SK-N-SH (cell line): ENCODE measurements at regions of chr17 and their contacts with region 1.

Region 1: DNA sequence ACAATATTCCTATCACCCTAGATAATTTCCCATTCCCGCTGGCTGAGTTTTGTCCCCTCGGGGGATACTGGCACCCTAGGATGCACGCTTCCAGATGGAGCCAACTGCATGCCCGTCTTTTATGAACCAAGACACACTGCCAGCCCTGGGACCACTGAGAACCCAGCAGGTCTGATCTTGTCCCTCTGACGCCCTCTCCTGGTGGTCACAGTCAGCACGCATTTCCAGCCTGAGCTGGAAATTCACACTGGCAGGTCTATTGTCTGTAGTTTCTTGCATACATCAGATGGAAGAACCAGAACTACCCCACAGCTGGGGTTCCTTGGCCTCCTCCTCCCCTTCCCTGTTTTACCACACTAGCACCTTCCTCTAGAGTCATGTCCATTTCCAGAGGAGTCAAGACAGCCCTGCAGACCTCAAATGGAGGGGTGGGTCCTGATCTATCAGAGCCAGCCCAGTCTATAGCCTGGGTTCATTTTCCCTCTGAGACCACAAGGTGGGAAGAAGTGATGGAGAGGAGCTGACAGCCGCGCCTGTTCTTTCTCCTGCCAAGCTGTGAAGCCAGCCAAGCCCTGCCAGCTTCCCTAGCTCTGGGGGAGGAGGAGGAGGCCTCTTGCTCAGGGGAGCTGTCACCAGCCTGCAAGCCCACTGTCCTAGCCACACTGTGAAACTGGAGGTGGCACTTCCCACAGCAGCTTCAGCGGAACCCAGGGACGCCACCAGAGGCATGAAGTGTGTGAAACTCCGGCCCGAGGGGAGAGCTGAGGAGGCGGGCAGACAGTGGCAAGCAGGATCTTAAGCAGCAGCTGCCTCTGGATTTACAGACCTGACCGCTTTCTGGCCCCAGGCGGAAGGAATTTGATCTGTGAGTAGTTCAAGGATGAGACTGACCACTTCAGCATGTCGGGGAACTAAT is 29.3 kb downstream of the MXRA7 start:
- DNase-seq: peak; percentile 89
- H3K4me3 ChIP-seq: no peak overlapping the region; a peak in 1 of 4 replicates
- H3K27ac ChIP-seq: peak overlapping the region in 1 of 2 experiments; percentile 23; a peak in 1 of 4 replicates
- H3K4me1 ChIP-seq: peaks cover 0 to 23% of the 10 kb centered on the region in 2 experiments; a peak in 1 of 4 replicates
- H3K27me3 ChIP-seq: no peaks in the 10 kb centered on the region
- CTCF ChIP-seq: peak; percentile 95
- EP300 ChIP-seq: no peak
- RAD21 ChIP-seq: peak; percentile 95

Region 2: DNA sequence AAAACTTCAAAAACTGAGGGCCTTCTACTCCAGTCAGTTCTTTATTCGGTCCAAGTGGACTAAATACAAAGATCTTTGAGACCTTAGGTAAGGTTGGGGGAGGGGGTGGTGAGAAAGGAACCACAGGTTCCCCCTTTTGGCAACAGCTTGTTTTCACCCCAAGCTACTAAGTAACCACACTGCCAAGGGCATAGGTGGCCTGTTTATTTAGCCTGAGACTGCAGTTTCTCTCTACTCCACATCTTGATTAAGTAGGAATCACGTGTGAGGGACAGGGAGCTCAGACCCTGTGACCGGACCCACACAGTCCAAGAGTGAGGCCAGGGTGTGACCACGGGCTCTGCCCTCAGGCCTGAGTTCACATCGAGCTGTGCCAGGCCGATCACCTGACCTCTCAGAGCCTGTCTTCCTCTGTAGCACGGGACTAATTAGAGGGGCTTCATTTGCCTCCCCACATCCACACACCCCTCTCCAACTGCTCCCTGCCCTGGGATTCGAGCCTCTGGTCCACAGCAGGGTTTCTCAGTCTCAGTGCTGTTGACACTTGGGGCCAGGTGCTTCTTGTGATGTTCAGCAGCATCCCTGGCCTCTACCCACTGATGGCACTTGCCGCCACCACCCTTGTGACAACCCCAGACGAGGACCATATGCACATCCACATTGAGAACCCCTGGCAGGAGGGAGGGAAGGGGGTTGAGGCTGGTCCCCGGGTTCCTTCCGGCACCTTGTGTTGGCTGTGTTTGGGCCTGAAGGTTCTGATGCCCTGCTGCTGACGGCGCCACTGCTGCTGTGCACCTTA is 113.6 kb before region 1 on chr17:
- CTCF ChIA-PET with region 1: interaction called, 25 read pairs
- POLR2A ChIA-PET with region 1: interaction called, 3 read pairs
- DNase-seq: peak; percentile 45
- H3K4me3 ChIP-seq: no peak overlapping the region
- H3K27ac ChIP-seq: no peak overlapping the region; a peak in 1 of 4 replicates
- H3K4me1 ChIP-seq: peaks cover 1 to 8% of the 10 kb centered on the region in 2 experiments; a peak in 2 of 4 replicates
- H3K27me3 ChIP-seq: no peaks in the 10 kb centered on the region
- CTCF ChIP-seq: no peak
- EP300 ChIP-seq: no peak
- RAD21 ChIP-seq: no peak

Region 3: DNA sequence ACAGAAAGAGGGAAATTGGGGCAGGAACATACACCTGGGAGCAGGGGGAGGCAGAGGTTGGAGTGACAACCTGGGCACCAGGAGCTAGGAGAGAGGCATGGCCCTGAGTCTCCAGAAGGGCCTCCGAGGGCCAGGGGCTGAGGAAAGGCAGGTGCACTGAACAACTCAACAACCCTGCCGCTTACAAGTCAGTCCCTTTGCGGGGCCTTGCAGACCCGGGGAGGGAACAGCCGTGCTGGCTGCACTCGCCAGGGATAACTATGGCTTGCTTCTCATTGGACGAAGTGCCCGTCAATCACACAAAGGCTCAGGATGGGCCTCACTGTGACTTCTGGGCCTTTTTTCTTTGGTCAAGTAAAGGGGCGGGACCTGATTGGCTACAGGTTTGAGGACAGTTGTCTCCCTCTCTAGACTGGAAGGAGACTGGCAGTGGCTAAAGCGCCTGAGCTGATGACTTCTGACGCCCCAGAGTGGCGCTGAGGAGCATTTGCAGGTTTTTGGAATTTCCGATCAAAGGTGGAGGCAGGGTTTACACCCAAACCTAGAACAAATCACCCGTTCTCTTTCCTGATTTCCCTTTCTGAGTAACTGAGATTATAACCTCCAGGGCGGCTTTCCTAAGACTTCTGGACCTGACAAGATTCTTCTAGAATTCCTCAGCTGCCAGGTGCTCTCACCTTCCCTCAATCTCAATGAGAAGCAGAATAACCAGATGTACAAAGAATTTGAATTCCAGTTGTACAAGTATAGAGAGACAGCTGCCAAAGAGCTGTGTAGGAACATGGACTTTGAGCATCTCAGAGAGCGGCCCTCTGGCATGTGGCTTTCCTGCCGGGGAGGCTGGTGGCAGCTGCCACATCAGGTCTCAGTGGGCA is 68.3 kb before region 1 on chr17:
- CTCF ChIA-PET with region 1: interaction called, 16 read pairs
- POLR2A ChIA-PET with region 1: no interaction called
- DNase-seq: no peak
- H3K4me3 ChIP-seq: no peak overlapping the region
- H3K27ac ChIP-seq: no peak overlapping the region
- H3K4me1 ChIP-seq: no peaks in the 10 kb centered on the region; a peak in 1 of 4 replicates
- H3K27me3 ChIP-seq: no peaks in the 10 kb centered on the region; the same call in 1 of the 2 replicates
- CTCF ChIP-seq: no peak
- EP300 ChIP-seq: no peak
- RAD21 ChIP-seq: no peak

Region 4: GRCh38 chr17:76671123-76671911 is 10.2 kb before region 1 on chr17:
- CTCF ChIA-PET with region 1: interaction called, 42 read pairs
- POLR2A ChIA-PET with region 1: interaction called, 6 read pairs
- DNase-seq: peak; percentile 99
- H3K4me3 ChIP-seq: peak overlapping the region; percentile 69 to 70
- H3K27ac ChIP-seq: peak overlapping the region in 1 of 2 experiments; percentile 94; a peak in 3 of 4 replicates
- H3K4me1 ChIP-seq: peaks cover 0 to 33% of the 10 kb centered on the region in 2 experiments; a peak in 2 of 4 replicates
- H3K27me3 ChIP-seq: no peaks in the 10 kb centered on the region
- CTCF ChIP-seq: no peak
- EP300 ChIP-seq: no peak; a peak in 1 of 4 replicates
- RAD21 ChIP-seq: no peak

Region 5: DNA sequence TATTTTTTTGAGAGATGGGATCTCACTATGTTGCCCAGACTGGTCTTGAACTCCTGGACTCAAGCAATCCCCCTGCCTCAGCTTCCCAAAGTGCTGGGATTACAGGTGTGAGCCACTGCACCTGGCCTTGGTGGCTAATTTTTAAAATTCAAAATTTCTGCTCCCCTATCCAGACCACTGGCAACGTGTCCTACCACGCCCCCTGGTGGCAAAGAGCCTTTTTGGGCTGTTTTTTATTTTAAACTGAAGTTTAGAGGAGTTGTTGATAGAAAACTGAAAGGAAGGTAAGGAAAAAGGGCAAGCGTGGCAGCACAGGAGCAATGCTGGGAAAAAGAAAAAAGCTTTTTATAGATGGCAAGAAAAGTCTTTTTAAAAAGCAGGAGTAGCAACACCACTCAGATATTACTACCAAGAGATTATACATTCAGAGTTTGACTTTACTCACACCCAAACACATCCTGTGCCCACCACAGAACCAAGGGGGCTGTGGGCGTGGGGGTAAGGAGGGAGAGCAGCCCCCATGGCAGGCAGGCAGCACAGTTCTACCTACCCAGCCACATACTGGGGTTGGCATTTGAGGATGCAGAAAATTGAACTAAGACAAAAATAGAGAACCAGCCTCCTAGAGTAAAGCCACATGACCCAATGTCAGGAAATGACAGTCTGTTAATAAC is 33.5 kb after region 1 on chr17:
- CTCF ChIA-PET with region 1: interaction called, 255 read pairs
- POLR2A ChIA-PET with region 1: interaction called, 3 read pairs
- DNase-seq: peak; percentile 76
- H3K4me3 ChIP-seq: no peak overlapping the region
- H3K27ac ChIP-seq: peak overlapping the region in 1 of 2 experiments; percentile 97; a peak in 3 of 4 replicates
- H3K4me1 ChIP-seq: peaks cover 10 to 32% of the 10 kb centered on the region in 2 experiments
- H3K27me3 ChIP-seq: no peaks in the 10 kb centered on the region
- CTCF ChIP-seq: peak; percentile 100
- EP300 ChIP-seq: no peak
- RAD21 ChIP-seq: peak; percentile 81

Region 6: DNA sequence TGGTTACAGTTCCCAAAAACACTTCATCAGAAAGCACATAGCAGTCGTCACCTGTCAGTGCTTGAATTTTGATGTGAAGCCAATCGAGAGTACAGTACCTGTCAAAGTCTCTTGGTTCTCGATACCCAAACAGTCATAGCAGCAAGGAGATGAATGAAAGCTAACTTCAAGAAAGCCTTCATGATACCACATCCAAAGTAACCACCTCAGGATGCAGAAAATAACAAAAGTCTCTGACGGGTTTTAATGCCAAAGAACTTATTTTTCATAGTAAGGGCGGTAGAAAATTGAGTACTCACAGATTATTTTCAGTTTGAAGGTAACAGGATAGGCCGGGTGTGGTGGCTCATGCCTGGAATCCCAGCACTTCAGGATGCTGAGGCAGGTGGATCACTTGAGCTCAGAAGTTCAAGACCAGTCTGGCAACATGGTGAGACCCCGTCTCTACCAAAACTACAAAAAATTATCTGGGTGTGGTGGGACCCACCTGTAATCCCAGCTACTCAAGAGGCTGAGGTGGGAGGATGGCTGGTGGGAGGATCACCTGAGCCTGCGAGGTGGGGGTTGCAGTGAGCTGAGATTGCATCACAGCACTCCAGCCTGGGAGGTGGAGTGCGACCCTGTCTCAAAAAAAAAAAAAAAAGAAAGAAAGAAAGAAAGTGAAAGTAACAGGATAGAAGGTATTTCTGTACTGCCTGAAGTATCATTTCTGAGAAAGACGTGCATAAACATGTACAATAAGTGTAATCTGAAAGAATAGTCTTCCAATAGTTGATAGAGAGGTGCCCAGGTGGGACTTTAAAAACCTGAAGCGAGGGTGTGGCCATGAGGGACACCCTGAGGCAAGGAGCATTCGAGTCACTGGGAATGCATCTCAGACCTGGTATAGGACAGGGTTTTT is 71.8 kb after region 1 on chr17:
- CTCF ChIA-PET with region 1: no interaction called
- POLR2A ChIA-PET with region 1: no interaction called
- DNase-seq: no peak
- H3K4me3 ChIP-seq: no peak overlapping the region
- H3K27ac ChIP-seq: no peak overlapping the region
- H3K4me1 ChIP-seq: no peaks in the 10 kb centered on the region
- H3K27me3 ChIP-seq: no peaks in the 10 kb centered on the region
- CTCF ChIP-seq: no peak
- EP300 ChIP-seq: no peak
- RAD21 ChIP-seq: no peak